ENCODE measurements at regions of chr7 and their contacts with region 1.

Region 1: DNA sequence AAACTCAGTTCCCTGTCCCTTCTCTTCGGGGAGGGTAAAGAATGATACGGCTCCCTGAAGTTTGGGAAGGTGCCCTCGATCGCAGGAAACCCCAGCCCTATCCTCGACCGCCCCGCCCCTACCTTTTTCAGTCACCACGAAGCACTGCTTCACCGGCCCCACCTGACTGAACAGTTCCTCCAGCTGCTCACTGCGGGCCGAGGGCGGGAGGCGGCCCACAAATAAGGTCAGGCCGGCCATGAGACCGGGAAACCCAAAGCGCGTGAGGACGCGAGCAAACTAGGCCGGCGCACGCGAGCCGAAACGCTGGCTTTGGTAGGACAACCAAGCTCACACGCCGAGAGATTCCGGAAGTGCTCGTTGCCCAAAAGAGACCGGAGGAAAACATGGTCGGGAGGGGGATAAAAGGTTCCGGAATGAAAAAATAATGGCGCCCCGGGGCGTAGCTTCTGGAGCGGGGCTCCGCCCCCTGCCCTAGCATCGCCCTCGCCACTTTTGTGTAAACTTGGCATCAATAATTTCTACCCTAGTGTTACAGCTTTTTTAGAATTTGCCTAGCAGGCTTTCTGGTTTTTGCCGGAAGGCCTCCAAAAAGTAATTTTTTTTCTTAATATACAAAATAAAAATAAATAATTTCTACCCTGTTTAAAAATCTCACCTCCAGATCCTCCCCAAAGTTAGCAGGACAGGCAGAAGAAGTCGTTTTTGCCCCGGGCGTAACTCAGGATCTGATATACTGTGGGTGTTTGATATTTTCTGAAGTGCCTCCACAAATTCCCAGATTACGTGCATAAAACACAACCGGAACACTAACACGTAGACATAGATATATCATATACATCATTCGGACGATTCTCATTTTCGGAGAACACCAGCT is at the start of gene RBM28:
- H3K4me3 ChIP-seq: peak within 1 kb of the TSS; percentile 95
- H3K27ac ChIP-seq: peak within 1 kb of the TSS; percentile 42
- H3K4me1 ChIP-seq: no peaks in the 10 kb centered on the region
- CTCF ChIP-seq: peak; percentile 28; the same call in 1 of the 2 replicates

Region 2: GRCh38 chr7:128361411-128362379 is 17.9 kb after region 1 on chr7 and contains the start of gene PRRT4:
- CTCF ChIA-PET with region 1: interaction called, 28 read pairs
- POLR2A ChIA-PET with region 1: interaction called, 4 read pairs
- H3K4me3 ChIP-seq: peak within 1 kb of the TSS; percentile 47
- H3K27ac ChIP-seq: peak within 1 kb of the TSS; percentile 31; the same call in 1 of the 2 replicates
- H3K4me1 ChIP-seq: no peaks in the 10 kb centered on the region; the same call in 1 of the 2 replicates
- CTCF ChIP-seq: peak; percentile 50; the same call in 1 of the 2 replicates

Region 3: GRCh38 chr7:128387216-128388144 is 43.7 kb after region 1 on chr7:
- CTCF ChIA-PET with region 1: interaction called, 378 read pairs
- POLR2A ChIA-PET with region 1: interaction called, 8 read pairs
- H3K4me3 ChIP-seq: no peak overlapping the region
- H3K27ac ChIP-seq: no peak overlapping the region
- H3K4me1 ChIP-seq: no peaks in the 10 kb centered on the region
- CTCF ChIP-seq: peak; percentile 88

Region 4: GRCh38 chr7:128409596-128410160 is 65.9 kb after region 1 on chr7 and contains the start of gene IMPDH1:
- CTCF ChIA-PET with region 1: interaction called, 10 read pairs
- POLR2A ChIA-PET with region 1: interaction called, 8 read pairs
- H3K4me3 ChIP-seq: peak within 1 kb of the TSS; percentile 70
- H3K27ac ChIP-seq: peak within 1 kb of the TSS; percentile 45
- H3K4me1 ChIP-seq: no peaks in the 10 kb centered on the region; the same call in 1 of the 2 replicates
- CTCF ChIP-seq: no peak

Measured in HEK293 (cell line).